ENCODE measurements at regions of chr20 and their contacts with region 1.

Region 1: GRCh38 chr20:49982346-49983122 is at the start of gene SNAI1:
- DNase-seq: peak; percentile 100
- H3K27ac ChIP-seq: no peak within 1 kb of the TSS
- CTCF ChIP-seq: peak; percentile 73

Region 2: DNA sequence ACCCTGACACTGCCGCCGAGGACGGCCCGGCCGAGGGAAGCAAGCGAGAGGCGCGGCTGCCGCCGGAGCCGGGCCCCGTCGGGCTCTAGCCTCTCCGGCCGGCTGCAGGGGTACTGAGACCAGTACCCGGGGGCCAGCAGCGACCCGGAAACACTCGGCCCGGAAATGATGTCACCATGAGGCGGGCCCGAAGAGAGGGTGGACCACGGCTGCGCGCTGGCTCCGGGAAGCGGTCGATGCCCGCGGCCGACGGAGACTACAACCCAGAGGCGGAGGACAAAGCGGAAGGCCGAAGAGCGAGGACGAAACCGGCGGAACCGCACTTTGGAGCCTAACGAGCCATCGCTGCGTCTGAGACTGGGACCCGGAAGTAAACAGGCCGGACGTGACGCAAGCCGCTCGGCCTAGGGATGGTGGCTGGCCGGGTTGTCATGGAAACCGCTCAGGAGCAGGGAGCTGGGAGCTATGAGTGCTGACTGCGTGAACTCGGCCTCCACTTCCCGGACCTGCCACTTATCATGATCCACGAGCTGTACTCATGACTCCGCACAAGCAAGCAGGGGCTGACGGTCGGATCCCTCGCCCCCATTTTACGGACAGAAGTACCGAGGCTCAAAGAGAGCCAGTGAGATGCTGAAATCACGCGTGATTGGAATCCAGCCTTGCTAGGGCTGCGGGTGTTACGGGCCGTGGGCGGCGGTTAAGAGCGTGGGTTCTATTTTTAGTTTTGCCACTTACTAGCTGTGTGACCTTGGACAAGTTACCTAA is 67.0 kb before region 1 on chr20 and contains the start of gene SPATA2:
- CTCF ChIA-PET with region 1: interaction called, 11 read pairs
- POLR2A ChIA-PET with region 1: no interaction called
- DNase-seq: peak; percentile 99
- H3K27ac ChIP-seq: peak within 1 kb of the TSS; percentile 98
- CTCF ChIP-seq: no peak

Region 3: GRCh38 chr20:49948809-49949548 is 33.6 kb before region 1 on chr20:
- CTCF ChIA-PET with region 1: interaction called, 12 read pairs
- POLR2A ChIA-PET with region 1: no interaction called
- DNase-seq: no peak
- H3K27ac ChIP-seq: peak overlapping the region; percentile 20; the same call in 1 of the 2 replicates
- CTCF ChIP-seq: no peak

Region 4: GRCh38 chr20:50009521-50010378 is 27.2 kb after region 1 on chr20:
- CTCF ChIA-PET with region 1: interaction called, 11 read pairs
- POLR2A ChIA-PET with region 1: no interaction called
- DNase-seq: no peak
- H3K27ac ChIP-seq: no peak overlapping the region
- CTCF ChIP-seq: no peak

Region 5: GRCh38 chr20:50048420-50049166 is 66.1 kb after region 1 on chr20:
- CTCF ChIA-PET with region 1: interaction called, 12 read pairs
- POLR2A ChIA-PET with region 1: no interaction called
- DNase-seq: no peak
- H3K27ac ChIP-seq: no peak overlapping the region
- CTCF ChIP-seq: no peak

Region 6: GRCh38 chr20:50077818-50078604 is 95.5 kb after region 1 on chr20:
- CTCF ChIA-PET with region 1: interaction called, 416 read pairs
- POLR2A ChIA-PET with region 1: no interaction called
- DNase-seq: no peak
- H3K27ac ChIP-seq: peak overlapping the region; percentile 22
- CTCF ChIP-seq: no peak

Region 7: GRCh38 chr20:50120897-50121693 is 138.6 kb after region 1 on chr20:
- CTCF ChIA-PET with region 1: interaction called, 22 read pairs
- POLR2A ChIA-PET with region 1: no interaction called
- DNase-seq: peak; percentile 91
- H3K27ac ChIP-seq: peak overlapping the region; percentile 56
- CTCF ChIP-seq: peak; percentile 99

Region 8: GRCh38 chr20:50348096-50348495 is 365.6 kb after region 1 on chr20:
- CTCF ChIA-PET with region 1: no interaction called
- POLR2A ChIA-PET with region 1: no interaction called
- DNase-seq: no peak
- H3K27ac ChIP-seq: no peak overlapping the region
- CTCF ChIP-seq: no peak

Measured in RWPE1 (cell line).